Right ventricle myocardium inferior (tissue), 1 donor: ENCODE measurements at regions of chr15 and their contacts with region 1.

Region 1: GRCh38 chr15:72671535-72671934 is 14.4 kb downstream of the HIGD2B start:
- DNase-seq: no peak
- ATAC-seq: no peak

Region 2: GRCh38 chr15:72599855-72600464 is 71.6 kb before region 1 on chr15:
- intact Hi-C with region 1: loop called (anchors 10 kb)
- DNase-seq: no peak
- ATAC-seq: no peak